A549 (cell line): ENCODE measurements at regions of chr9 and their contacts with region 1.

Region 1: GRCh38 chr9:3525836-3526164 is at the start of gene RFX3:
- DNase-seq: peak; percentile 69 to 95
- ATAC-seq: peak; percentile 83 to 86
- H3K4me3 ChIP-seq: peak within 1 kb of the TSS; percentile 96
- H3K27ac ChIP-seq: peak within 1 kb of the TSS; percentile 98 to 100
- H3K4me1 ChIP-seq: peaks cover 20% of the 10 kb centered on the region
- CTCF ChIP-seq: no peak
- EP300 ChIP-seq: no peak
- POLR2A ChIP-seq: peak; percentile 48; the same call in 1 of the 2 replicates
- RAD21 ChIP-seq: 0 out of 5 replicates have a peak, but pooled peaks of 1 of the 2 experiments have one; percentile 8
- polyA plus RNA-seq, gene RFX3: 7.9 and 9.0 TPM in 2 replicates

Region 2: GRCh38 chr9:2709645-2710101 is 816.1 kb before region 1 on chr9:
- CTCF ChIA-PET with region 1: no interaction called
- POLR2A ChIA-PET with region 1: no interaction called
- DNase-seq: no peak
- ATAC-seq: no peak
- H3K4me3 ChIP-seq: no peak overlapping the region
- H3K27ac ChIP-seq: no peak overlapping the region
- H3K4me1 ChIP-seq: no peaks in the 10 kb centered on the region
- CTCF ChIP-seq: no peak
- EP300 ChIP-seq: no peak
- POLR2A ChIP-seq: no peak
- RAD21 ChIP-seq: no peak

Region 3: GRCh38 chr9:3391414-3391813 is 134.4 kb before region 1 on chr9:
- CTCF ChIA-PET with region 1: no interaction called
- POLR2A ChIA-PET with region 1: no interaction called
- DNase-seq: no peak
- ATAC-seq: no peak
- H3K4me3 ChIP-seq: no peak overlapping the region
- H3K27ac ChIP-seq: no peak overlapping the region
- H3K4me1 ChIP-seq: no peaks in the 10 kb centered on the region
- CTCF ChIP-seq: no peak
- EP300 ChIP-seq: no peak
- POLR2A ChIP-seq: no peak
- RAD21 ChIP-seq: no peak

Region 4: GRCh38 chr9:3508521-3509291 is 17.1 kb before region 1 on chr9:
- CTCF ChIA-PET with region 1: interaction called, 3 read pairs
- POLR2A ChIA-PET with region 1: interaction called, 32 read pairs
- DNase-seq: peak in 1 of 2 experiments; percentile 59
- ATAC-seq: peak; percentile 65 to 67; a peak in 3 of 6 replicates
- H3K4me3 ChIP-seq: peak overlapping the region; percentile 31
- H3K27ac ChIP-seq: peak overlapping the region; percentile 86 to 91
- H3K4me1 ChIP-seq: peaks cover 49% of the 10 kb centered on the region
- CTCF ChIP-seq: no peak
- EP300 ChIP-seq: no peak
- POLR2A ChIP-seq: no peak
- RAD21 ChIP-seq: no peak

Region 5: DNA sequence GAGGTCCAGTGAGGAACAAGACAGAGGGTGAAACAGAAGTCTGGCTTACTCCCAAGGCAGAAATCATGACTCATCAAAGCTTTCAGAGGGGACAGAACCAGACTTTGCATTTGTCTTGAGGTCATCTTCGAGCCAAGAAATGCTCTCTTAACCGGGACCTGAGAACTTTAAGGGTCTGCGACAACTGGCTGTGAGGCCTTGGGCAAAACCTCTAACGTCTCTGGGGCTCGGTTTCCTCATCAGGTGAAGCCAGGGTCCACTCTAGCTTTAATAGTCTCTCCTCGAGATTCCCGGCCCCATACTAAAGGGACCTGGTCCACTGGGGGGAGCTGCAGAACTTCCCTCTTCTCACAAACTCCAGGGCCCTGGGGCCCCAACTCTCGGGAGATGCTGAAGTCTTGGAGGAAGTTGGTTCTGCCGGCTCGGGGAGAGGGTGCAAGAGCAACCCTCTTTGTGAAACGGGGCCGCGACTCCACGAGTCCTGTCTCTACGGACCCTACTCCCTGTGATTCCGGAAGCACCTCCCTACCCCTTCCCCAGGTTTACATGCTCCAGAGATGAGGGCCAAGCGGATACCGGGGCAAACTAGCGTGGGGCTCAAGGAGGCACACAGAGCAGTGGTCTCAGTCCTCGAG is 771.5 kb after region 1 on chr9:
- CTCF ChIA-PET with region 1: interaction called, 4 read pairs
- POLR2A ChIA-PET with region 1: interaction called, 14 read pairs
- DNase-seq: peak; percentile 87 to 92
- ATAC-seq: peak; percentile 60 to 73
- H3K4me3 ChIP-seq: peak overlapping the region; percentile 77
- H3K27ac ChIP-seq: peak overlapping the region; percentile 95 to 97
- H3K4me1 ChIP-seq: peaks cover 64% of the 10 kb centered on the region
- CTCF ChIP-seq: peak; percentile 64
- EP300 ChIP-seq: no peak
- POLR2A ChIP-seq: no peak; the same call in 1 of the 2 replicates
- RAD21 ChIP-seq: peak; percentile 60 to 65